Natural killer cell (primary cell): ENCODE measurements at regions of chr9 and their contacts with region 1.

Region 1: GRCh38 chr9:73104342-73104741 is 47.3 kb upstream of the ANXA1 start:
- DNase-seq: no peak
- ATAC-seq: no peak
- H3K4me3 ChIP-seq: no peak overlapping the region
- H3K4me3 Mint-ChIP-seq: no peak overlapping the region
- H3K27ac ChIP-seq: no peak overlapping the region
- H3K27ac Mint-ChIP-seq: no peak overlapping the region
- H3K4me1 ChIP-seq: no peaks in the 10 kb centered on the region
- H3K4me1 Mint-ChIP-seq: no peaks in the 10 kb centered on the region
- H3K27me3 ChIP-seq: no peaks in the 10 kb centered on the region
- H3K27me3 Mint-ChIP-seq: peaks cover 0 to 27% of the 10 kb centered on the region in 2 donors
- CTCF ChIP-seq: no peak

Region 2: GRCh38 chr9:73067074-73067473 is 37.3 kb before region 1 on chr9:
- intact Hi-C with region 1: no loop called
- DNase-seq: no peak
- ATAC-seq: no peak
- H3K4me3 ChIP-seq: no peak overlapping the region
- H3K4me3 Mint-ChIP-seq: no peak overlapping the region
- H3K27ac ChIP-seq: no peak overlapping the region
- H3K27ac Mint-ChIP-seq: no peak overlapping the region
- H3K4me1 ChIP-seq: no peaks in the 10 kb centered on the region
- H3K4me1 Mint-ChIP-seq: no peaks in the 10 kb centered on the region
- H3K27me3 ChIP-seq: no peaks in the 10 kb centered on the region
- H3K27me3 Mint-ChIP-seq: peaks cover 14 to 34% of the 10 kb centered on the region in 2 donors
- CTCF ChIP-seq: no peak

Region 3: GRCh38 chr9:73183917-73184861 is 79.8 kb after region 1 on chr9:
- intact Hi-C with region 1: loop called (anchors 1 kb)
- DNase-seq: peak in 1 of 2 donors; percentile 78
- ATAC-seq: peak in 1 of 3 donors; percentile 45
- H3K4me3 ChIP-seq: no peak overlapping the region
- H3K4me3 Mint-ChIP-seq: no peak overlapping the region
- H3K27ac ChIP-seq: no peak overlapping the region
- H3K27ac Mint-ChIP-seq: no peak overlapping the region
- H3K4me1 ChIP-seq: no peaks in the 10 kb centered on the region
- H3K4me1 Mint-ChIP-seq: no peaks in the 10 kb centered on the region
- H3K27me3 ChIP-seq: no peaks in the 10 kb centered on the region
- H3K27me3 Mint-ChIP-seq: peaks cover 19 to 33% of the 10 kb centered on the region in 2 donors
- CTCF ChIP-seq: peak; percentile 86